Posterior vena cava (tissue), 2 donors: ENCODE measurements at regions of chr18 and their contacts with region 1.

Region 1: DNA sequence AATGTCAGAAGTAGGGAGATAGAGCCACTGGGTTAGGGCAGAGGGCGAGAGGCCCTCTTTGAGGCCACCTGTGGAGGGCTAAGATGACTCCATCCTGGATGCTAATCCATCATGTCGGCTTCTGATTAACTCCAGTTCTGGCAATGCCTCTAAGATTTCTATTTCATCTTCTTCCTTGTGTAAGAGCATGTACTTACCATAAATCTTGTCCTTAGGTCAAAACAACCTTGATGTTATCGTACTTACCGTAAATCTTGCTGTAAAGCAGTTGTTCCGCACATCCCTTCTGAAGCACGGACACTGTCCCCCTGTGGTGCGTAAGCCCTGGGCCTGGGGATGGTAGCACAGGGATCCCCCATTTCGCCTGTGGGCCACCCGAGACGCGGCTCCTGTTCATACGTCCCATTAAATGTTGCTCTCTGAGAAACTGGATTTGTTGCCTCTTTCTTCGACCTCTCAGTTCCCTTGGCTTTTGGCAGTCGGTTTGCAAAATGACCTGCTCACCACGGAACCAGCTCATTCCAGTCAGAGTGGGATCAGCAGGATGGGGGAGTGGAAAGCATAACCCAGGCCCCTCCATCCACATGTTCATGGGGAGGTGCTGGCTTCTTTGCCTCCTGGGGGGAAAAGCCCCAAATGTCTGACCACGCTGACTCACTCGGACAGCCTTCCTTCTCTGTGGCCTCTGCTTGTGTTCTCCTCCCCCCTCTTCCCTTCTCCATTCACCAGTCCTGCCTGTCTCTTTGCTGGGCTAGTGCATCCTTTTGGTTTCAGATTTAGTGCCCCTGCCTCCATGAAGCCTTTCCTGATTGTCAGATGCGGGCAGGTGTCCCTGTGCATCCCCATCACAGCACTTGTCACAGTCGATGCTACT is 49.9 kb downstream of the RAB31 start:
- DNase-seq: no peak

Region 2: DNA sequence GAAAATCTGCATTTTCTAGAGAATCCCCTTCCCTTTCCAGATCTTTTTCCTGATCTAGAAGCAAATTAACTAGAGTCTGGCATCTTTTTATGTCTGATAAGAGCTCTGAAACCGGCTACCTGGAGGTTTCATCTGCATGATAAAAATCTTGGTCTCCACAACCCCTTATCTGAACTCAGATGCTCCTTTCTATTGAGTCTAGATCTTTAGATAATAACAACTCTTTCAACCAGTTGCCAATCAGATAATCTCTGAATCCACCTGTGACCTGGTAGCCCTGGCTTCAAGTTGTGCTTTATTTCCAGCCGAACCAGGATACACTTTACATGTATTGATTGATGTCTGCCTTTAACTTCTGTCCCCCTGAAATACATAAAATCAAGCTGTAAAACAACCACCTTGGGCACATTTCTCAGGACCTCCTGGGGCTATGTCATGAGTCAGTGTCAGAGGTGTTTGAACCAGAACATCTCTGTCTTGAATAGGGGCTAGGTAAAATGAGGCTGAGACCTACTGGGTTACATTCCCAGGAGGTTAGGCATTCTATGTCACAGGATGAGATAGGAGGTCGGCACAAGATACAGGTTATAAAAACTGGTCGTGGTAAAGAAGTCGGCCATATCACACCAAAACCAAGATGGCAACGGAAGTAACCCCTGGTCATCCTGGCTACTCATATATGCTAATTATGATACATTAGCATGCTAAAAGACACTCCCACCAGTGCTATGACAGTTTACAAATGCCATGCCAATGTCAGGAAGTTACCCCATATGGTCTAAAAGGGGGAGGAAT is 261.9 kb before region 1 on chr18:
- intact Hi-C with region 1: no loop called
- DNase-seq: no peak

Region 3: GRCh38 chr18:9690418-9691188 is 67.4 kb before region 1 on chr18:
- intact Hi-C with region 1: loop called in 1 of 2 experiments (anchors 10 kb)
- DNase-seq: no peak

Region 4: GRCh38 chr18:9803698-9804516 is 45.9 kb after region 1 on chr18:
- intact Hi-C with region 1: loop called in 1 of 2 experiments (anchors 1 kb)
- DNase-seq: no peak